ENCODE measurements at regions of chr11 and their contacts with region 1.

Region 1: GRCh38 chr11:100855466-100856067 is 168.5 kb downstream of the ARHGAP42 start:
- DNase-seq: peak; percentile 36
- ATAC-seq: no peak
- H3K4me3 ChIP-seq: no peak overlapping the region
- H3K27ac ChIP-seq: no peak overlapping the region
- H3K4me1 ChIP-seq: no peaks in the 10 kb centered on the region
- H3K27me3 ChIP-seq: no peaks in the 10 kb centered on the region
- CTCF ChIP-seq: peak; percentile 59
- EP300 ChIP-seq: no peak
- POLR2A ChIP-seq: no peak
- RAD21 ChIP-seq: peak; percentile 15; the same call in 1 of the 2 replicates

Region 2: DNA sequence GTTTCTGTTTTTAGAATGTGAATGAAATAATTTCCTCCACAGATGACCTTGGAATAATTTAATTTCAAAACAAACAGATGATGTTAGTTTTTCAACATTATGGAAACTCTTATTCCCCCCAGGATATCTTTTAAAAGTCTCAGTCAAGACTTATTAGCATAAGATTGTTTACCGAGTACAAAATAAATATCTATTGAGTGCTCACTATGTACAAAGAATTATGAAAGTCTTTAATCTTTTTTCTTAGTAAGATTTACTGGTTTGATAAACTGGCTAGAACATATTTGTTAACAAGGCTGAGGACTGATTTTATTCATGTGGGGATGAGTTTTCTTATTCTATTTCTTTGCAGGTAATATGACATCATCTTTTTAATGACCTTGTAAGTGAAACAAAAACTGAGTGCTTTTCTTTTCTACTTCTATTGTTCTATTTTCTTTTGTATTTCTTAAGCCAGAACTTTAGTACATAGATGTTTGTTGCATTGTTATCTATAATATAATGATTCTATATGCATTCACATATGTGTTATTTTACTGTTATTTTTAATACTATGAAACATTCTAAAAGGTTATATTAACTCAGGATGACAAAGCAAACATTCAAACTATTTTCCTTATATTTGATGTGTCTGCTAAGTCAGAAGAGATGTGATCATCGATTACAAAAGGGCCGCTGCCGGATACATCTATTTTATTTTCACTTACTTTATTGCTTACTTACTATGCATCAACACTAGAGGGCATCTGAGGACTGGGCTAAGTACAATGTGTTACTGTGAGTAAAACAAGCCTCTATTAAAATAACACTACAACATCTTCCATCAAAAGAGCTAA is 279.5 kb before region 1 on chr11:
- CTCF ChIA-PET with region 1: interaction called, 34 read pairs
- POLR2A ChIA-PET with region 1: no interaction called
- in situ Hi-C with region 1: loop called (anchors 5 kb)
- intact Hi-C with region 1: loop called (anchors 1 kb)
- DNase-seq: peak; percentile 41
- ATAC-seq: peak; percentile 80
- H3K4me3 ChIP-seq: no peak overlapping the region
- H3K27ac ChIP-seq: no peak overlapping the region
- H3K4me1 ChIP-seq: no peaks in the 10 kb centered on the region
- H3K27me3 ChIP-seq: no peaks in the 10 kb centered on the region
- CTCF ChIP-seq: peak; percentile 73
- EP300 ChIP-seq: no peak
- POLR2A ChIP-seq: no peak
- RAD21 ChIP-seq: peak; percentile 53; the same call in 1 of the 2 replicates

Region 3: DNA sequence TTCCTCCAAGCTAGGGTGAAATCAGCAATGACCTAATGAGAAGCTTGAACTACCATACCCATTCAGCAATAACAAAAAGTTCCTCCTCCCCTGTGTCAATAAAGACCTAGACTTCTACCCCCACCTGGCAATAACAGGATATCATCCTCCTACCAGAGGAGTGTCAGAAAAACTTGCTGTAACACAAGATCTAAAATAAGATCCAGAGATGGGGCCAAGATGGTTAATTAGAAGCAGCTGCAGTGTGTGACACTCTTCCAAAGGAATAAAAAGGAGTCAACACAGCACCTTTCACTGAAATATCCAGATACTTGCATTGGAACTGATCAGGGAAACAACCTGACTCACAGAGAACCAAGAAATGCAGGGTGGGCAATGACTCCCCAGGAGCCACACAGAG is 252.9 kb before region 1 on chr11:
- CTCF ChIA-PET with region 1: no interaction called
- POLR2A ChIA-PET with region 1: no interaction called
- in situ Hi-C with region 1: no loop called
- intact Hi-C with region 1: no loop called
- DNase-seq: no peak
- ATAC-seq: no peak
- H3K4me3 ChIP-seq: no peak overlapping the region
- H3K27ac ChIP-seq: no peak overlapping the region
- H3K4me1 ChIP-seq: no peaks in the 10 kb centered on the region
- H3K27me3 ChIP-seq: no peaks in the 10 kb centered on the region; a peak in 2 of 5 replicates
- CTCF ChIP-seq: no peak
- EP300 ChIP-seq: no peak
- POLR2A ChIP-seq: no peak
- RAD21 ChIP-seq: no peak

Region 4: DNA sequence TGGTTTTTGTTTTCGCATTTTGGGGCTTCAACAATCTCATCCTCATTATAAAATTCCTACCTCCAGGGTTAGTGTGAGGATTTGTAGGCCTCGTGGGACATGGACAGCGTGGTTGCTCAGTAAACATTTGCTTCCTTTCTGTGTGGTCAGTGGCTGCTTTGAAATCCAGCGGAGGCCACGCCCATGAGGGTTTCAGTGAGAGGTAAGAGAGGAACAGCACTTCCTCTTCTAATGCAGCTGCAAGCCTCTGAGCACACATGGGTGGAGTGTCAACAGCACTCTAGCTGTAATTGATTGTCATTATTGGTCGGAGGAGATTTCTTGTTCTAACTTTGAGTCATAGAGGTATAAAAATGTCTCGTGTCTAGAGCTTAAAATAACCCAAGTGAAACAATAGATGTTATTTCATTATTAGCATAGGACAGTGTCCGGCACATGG is 174.5 kb before region 1 on chr11:
- CTCF ChIA-PET with region 1: no interaction called
- POLR2A ChIA-PET with region 1: no interaction called
- in situ Hi-C with region 1: loop called (anchors 10 kb)
- intact Hi-C with region 1: loop called (anchors 2 kb)
- DNase-seq: peak; percentile 76
- ATAC-seq: peak; percentile 90
- H3K4me3 ChIP-seq: no peak overlapping the region
- H3K27ac ChIP-seq: no peak overlapping the region
- H3K4me1 ChIP-seq: peaks cover 38% of the 10 kb centered on the region
- H3K27me3 ChIP-seq: no peaks in the 10 kb centered on the region
- CTCF ChIP-seq: no peak
- EP300 ChIP-seq: no peak; a peak in 1 of 4 replicates
- POLR2A ChIP-seq: no peak
- RAD21 ChIP-seq: no peak

Region 5: DNA sequence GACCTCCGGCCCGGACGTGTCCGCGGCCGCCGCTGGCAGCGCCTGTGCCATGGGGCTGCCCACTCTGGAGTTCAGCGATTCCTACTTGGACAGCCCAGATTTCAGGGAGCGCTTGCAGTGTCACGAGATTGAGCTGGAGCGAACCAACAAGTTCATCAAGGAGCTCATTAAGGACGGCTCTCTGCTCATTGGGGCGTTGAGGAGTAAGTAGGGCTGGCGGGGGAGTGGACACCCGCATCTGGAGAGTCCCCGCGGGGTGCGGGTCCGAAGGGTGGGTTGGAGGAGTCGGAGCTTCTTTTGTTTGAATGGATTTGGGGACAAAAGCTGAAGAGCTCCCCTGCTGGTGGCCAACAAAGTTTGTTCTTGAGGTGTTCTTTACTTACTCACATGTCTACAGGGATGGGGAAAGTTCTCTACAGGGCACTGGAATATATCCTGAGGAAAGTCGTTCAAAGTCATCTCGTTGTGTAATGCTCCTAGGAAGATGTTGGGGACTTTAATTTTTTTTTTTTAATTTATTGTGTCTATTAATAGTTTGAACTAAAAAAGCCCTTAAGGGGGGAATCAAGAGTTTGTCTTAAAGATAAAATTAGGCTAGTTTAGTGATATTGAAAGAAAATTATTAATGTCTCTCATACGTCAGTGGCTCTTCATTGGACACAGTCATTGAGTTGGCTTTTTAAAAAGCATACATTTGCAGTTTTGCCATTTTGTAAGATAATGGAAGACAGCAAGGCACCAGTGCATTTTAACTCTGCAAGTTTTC is 167.8 kb before region 1 on chr11:
- CTCF ChIA-PET with region 1: no interaction called
- POLR2A ChIA-PET with region 1: no interaction called
- in situ Hi-C with region 1: loop called (anchors 10 kb)
- intact Hi-C with region 1: loop called (anchors 2 kb)
- DNase-seq: peak; percentile 55
- ATAC-seq: peak; percentile 81
- H3K4me3 ChIP-seq: peak overlapping the region; percentile 82 to 91 (median 84)
- H3K27ac ChIP-seq: no peak overlapping the region
- H3K4me1 ChIP-seq: peaks cover 34% of the 10 kb centered on the region
- H3K27me3 ChIP-seq: peaks cover 0 to 5% of the 10 kb centered on the region in 2 experiments; a peak in 2 of 5 replicates
- CTCF ChIP-seq: peak; percentile 62
- EP300 ChIP-seq: no peak
- POLR2A ChIP-seq: no peak
- RAD21 ChIP-seq: no peak

Region 6: GRCh38 chr11:100808904-100809491 is 46.6 kb before region 1 on chr11:
- CTCF ChIA-PET with region 1: no interaction called
- POLR2A ChIA-PET with region 1: no interaction called
- in situ Hi-C with region 1: no loop called
- intact Hi-C with region 1: no loop called
- DNase-seq: no peak
- ATAC-seq: no peak
- H3K4me3 ChIP-seq: no peak overlapping the region
- H3K27ac ChIP-seq: no peak overlapping the region
- H3K4me1 ChIP-seq: 0 out of 2 replicates have a peak, but pooled peaks cover 14% of the 10 kb centered on the region
- H3K27me3 ChIP-seq: no peaks in the 10 kb centered on the region
- CTCF ChIP-seq: no peak
- EP300 ChIP-seq: no peak
- POLR2A ChIP-seq: no peak
- RAD21 ChIP-seq: no peak

Region 7: DNA sequence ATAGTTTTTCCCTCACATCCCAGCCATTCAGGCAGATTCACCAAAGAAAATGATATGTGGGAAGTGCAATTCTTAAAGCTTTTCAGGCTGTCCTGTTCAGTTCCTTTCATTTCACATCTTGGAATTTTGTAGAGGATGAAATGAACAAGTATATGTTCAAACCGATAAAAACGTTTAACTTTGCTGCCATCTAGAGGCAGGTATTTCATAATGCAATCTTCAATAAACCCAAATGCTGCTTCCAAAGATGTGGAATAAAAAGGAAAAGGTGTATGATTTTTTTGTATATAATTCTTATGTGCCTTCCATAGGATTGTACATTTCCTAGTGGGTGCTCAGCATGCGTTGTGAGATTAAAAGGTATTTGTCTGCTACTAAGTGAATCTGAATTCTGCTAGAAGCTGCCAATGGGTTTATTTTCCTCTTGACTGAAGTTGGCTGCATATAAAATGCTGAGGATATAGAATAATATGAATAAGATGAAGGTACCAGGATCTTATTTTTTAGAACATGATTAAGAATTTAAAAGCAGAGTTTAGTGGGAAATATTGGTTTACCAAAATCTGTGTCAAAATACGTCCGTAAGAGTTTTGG is 74.7 kb after region 1 on chr11:
- CTCF ChIA-PET with region 1: no interaction called
- POLR2A ChIA-PET with region 1: no interaction called
- in situ Hi-C with region 1: no loop called
- intact Hi-C with region 1: loop called (anchors 1 kb)
- DNase-seq: peak; percentile 46
- ATAC-seq: peak; percentile 58; the same call in 2 of the 3 replicates
- H3K4me3 ChIP-seq: no peak overlapping the region
- H3K27ac ChIP-seq: no peak overlapping the region
- H3K4me1 ChIP-seq: no peaks in the 10 kb centered on the region
- H3K27me3 ChIP-seq: no peaks in the 10 kb centered on the region
- CTCF ChIP-seq: peak; percentile 63
- EP300 ChIP-seq: no peak
- POLR2A ChIP-seq: no peak
- RAD21 ChIP-seq: no peak

Measured in HepG2 (cell line).